ENCODE measurements at regions of chr14 and their contacts with region 1.

Region 1: DNA sequence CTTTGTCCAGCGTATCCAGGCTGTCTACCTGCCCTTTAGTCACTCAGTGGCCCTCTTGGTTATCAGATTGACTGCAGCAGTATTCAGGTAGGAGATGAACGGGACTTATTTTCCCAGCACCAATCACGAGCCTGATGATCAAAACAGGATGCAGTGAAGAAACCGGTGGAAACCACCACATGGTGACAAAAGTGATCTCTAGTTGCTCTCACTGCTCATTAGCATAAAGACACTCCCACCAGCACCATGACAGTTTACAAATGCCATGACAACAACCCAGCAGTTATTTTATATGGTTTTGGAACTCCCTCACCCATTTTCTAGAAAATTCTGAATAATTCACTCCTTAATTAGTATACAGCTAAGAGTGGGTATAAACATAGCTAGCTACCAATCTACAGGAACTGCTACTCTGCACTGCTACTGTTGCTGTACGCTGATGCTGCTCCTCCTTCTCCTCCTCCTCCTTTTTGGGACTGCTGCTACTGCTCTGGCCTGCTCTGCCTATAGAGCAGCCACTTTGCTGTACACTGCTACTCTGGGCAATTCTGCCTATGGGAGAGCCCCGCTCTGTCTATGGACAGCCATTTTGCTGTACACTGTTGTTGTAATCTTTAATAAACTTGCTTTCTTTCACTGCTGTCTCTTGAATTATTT is 142.5 kb upstream of the SSTR1 start:
- DNase-seq: no peak
- H3K4me3 Mint-ChIP-seq: no peak overlapping the region
- H3K27ac Mint-ChIP-seq: no peak overlapping the region
- H3K4me1 Mint-ChIP-seq: no peaks in the 10 kb centered on the region
- H3K27me3 Mint-ChIP-seq: no peaks in the 10 kb centered on the region
- CTCF ChIP-seq: no peak

Region 2: GRCh38 chr14:38016497-38016896 is 48.7 kb before region 1 on chr14:
- CTCF ChIA-PET with region 1: no interaction called
- intact Hi-C with region 1: no loop called
- DNase-seq: no peak
- H3K4me3 Mint-ChIP-seq: no peak overlapping the region
- H3K27ac Mint-ChIP-seq: no peak overlapping the region
- H3K4me1 Mint-ChIP-seq: no peaks in the 10 kb centered on the region
- H3K27me3 Mint-ChIP-seq: peaks cover 8% of the 10 kb centered on the region
- CTCF ChIP-seq: peak; percentile 30

Region 3: GRCh38 chr14:38078393-38078792 is 13.2 kb after region 1 on chr14:
- CTCF ChIA-PET with region 1: interaction called, 11 read pairs
- intact Hi-C with region 1: no loop called
- DNase-seq: peak; percentile 32
- H3K4me3 Mint-ChIP-seq: no peak overlapping the region
- H3K27ac Mint-ChIP-seq: peak overlapping the region; percentile 71
- H3K4me1 Mint-ChIP-seq: peaks cover 29% of the 10 kb centered on the region
- H3K27me3 Mint-ChIP-seq: no peaks in the 10 kb centered on the region
- CTCF ChIP-seq: no peak

Region 4: DNA sequence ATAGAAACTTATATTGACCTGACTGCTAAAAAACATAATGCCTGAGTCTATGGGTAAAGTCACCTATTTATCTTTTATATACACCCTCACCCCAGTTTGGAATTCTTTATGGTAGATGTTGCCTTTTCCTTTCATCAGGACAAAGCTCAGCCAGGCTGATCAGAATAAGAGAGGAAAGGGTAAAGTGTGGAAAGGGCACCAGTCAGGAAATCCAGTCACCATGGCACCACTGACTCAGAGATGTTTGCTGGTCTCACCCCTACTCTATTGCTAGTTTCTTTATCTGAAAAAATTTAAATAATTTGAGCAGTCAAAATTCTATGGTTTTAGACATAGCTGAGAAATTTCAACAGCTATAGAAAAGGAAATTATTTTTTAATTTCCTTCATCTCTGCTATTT is 93.2 kb after region 1 on chr14:
- CTCF ChIA-PET with region 1: no interaction called
- intact Hi-C with region 1: no loop called
- DNase-seq: no peak
- H3K4me3 Mint-ChIP-seq: no peak overlapping the region
- H3K27ac Mint-ChIP-seq: no peak overlapping the region
- H3K4me1 Mint-ChIP-seq: no peaks in the 10 kb centered on the region
- H3K27me3 Mint-ChIP-seq: no peaks in the 10 kb centered on the region
- CTCF ChIP-seq: no peak

Region 5: DNA sequence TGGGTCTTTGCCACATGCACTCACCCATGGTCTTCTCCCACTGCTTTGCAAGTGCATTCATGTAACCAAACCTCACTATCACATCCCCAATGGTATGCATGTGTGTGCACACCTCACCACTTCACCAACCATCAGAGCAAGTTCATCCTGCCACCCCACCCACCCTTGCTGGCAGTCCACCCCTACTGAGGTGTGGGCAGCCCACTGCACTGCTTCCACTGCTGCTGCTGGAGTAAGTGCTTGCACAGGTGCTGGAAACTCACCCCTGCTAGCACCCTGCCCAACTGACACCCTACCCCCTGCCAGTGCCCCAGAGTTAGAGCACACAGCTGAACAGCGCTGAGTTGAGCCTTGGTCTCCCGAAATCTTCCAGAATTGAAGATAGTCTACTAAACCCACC is 236.8 kb after region 1 on chr14:
- CTCF ChIA-PET with region 1: no interaction called
- intact Hi-C with region 1: no loop called
- DNase-seq: no peak
- H3K4me3 Mint-ChIP-seq: no peak overlapping the region
- H3K27ac Mint-ChIP-seq: no peak overlapping the region
- H3K4me1 Mint-ChIP-seq: no peaks in the 10 kb centered on the region
- H3K27me3 Mint-ChIP-seq: no peaks in the 10 kb centered on the region
- CTCF ChIP-seq: no peak

Measured in Calu3 (cell line).